Panc1 (cell line): ENCODE measurements at regions of chr3 and their contacts with region 1.

Region 1: GRCh38 chr3:195596765-195597171 is 13.0 kb upstream of the APOD start:
- DNase-seq: no peak
- ATAC-seq: no peak
- H3K4me3 ChIP-seq: no peak overlapping the region
- H3K27ac ChIP-seq: no peak overlapping the region
- H3K4me1 ChIP-seq: no peaks in the 10 kb centered on the region
- H3K27me3 ChIP-seq: no peaks in the 10 kb centered on the region
- CTCF ChIP-seq: no peak

Region 2: GRCh38 chr3:195770081-195770840 is 173.5 kb after region 1 on chr3:
- CTCF ChIA-PET with region 1: no interaction called
- POLR2A ChIA-PET with region 1: interaction called, 22 read pairs
- in situ Hi-C with region 1: no loop called
- intact Hi-C with region 1: no loop called
- DNase-seq: no peak
- ATAC-seq: no peak
- H3K4me3 ChIP-seq: no peak overlapping the region
- H3K27ac ChIP-seq: no peak overlapping the region
- H3K4me1 ChIP-seq: no peaks in the 10 kb centered on the region
- H3K27me3 ChIP-seq: no peaks in the 10 kb centered on the region
- CTCF ChIP-seq: no peak